Transverse colon (tissue), 4 donors: ENCODE measurements at regions of chr9 and their contacts with region 1.

Region 1: DNA sequence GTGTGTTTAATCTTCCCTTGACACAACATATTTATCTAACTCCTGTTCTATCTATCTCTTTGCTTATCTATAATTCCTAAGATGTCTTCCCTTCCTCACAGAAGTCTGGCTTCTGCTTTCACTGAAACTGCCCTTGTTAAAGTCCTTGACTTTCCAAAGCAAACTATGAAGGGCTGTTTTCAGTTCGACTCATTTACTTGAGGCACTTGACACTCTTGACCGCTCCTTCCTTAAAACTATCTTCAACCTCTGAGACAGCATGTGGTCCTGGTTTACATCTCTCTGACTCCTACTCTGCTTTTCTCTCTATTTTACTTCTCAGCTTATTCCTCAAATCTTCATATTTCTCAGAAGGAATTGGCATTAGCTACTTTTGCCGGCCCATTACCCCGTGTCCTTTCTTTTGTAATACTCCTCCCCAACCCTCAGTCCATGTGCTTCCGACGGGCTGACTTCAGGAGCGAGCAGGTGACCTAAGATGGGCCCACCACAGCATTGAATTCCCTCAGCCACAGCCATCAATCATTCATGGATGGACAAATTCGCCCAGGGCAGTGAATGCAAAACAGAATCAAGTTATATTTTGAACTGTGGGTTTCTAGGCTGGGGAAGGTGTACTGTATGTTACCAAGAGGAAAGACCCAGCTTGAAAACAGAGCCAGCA is 1089.2 kb downstream of the PTPRD start:
- DNase-seq: no peak
- H3K4me3 ChIP-seq: no peak overlapping the region
- H3K27ac ChIP-seq: no peak overlapping the region
- H3K4me1 ChIP-seq: no peaks in the 10 kb centered on the region
- H3K27me3 ChIP-seq: no peaks in the 10 kb centered on the region
- CTCF ChIP-seq: no peak
- EP300 ChIP-seq: no peak
- POLR2A ChIP-seq: no peak

Region 2: DNA sequence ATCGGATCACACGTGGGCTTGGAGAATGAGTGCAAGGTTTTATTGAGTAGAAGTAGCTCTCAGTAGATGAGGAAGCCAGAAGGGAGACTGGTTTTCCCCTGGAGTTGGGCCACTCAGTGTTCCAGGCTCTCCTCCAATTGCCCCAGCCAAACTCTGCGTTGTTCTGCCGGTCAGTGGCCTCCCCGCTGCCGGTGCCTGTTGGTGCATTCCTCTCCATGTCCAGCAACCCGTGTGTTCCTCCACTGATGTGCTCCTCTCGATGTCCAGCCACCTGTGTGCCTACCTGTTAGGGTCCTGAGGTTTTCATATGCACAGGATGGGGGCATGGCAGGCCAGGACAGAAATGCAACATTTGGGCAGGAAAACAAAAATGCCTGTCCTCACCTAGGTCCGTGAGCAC is 1977.2 kb after region 1 on chr9:
- in situ Hi-C with region 1: no loop called
- intact Hi-C with region 1: loop called (anchors 10 kb)
- DNase-seq: no peak
- H3K4me3 ChIP-seq: no peak overlapping the region
- H3K27ac ChIP-seq: no peak overlapping the region
- H3K4me1 ChIP-seq: no peaks in the 10 kb centered on the region
- H3K27me3 ChIP-seq: no peaks in the 10 kb centered on the region
- CTCF ChIP-seq: no peak
- EP300 ChIP-seq: no peak
- POLR2A ChIP-seq: no peak